RWPE1 (cell line): ENCODE measurements at regions of chr4 and their contacts with region 1.

Region 1: GRCh38 chr4:78171482-78171881 is 114.4 kb downstream of the FRAS1 start:
- DNase-seq: no peak
- H3K27ac ChIP-seq: no peak overlapping the region
- CTCF ChIP-seq: no peak

Region 2: GRCh38 chr4:77921701-77922100 is 249.8 kb before region 1 on chr4:
- CTCF ChIA-PET with region 1: no interaction called
- POLR2A ChIA-PET with region 1: no interaction called
- DNase-seq: peak; percentile 82
- H3K27ac ChIP-seq: no peak overlapping the region
- CTCF ChIP-seq: no peak

Region 3: DNA sequence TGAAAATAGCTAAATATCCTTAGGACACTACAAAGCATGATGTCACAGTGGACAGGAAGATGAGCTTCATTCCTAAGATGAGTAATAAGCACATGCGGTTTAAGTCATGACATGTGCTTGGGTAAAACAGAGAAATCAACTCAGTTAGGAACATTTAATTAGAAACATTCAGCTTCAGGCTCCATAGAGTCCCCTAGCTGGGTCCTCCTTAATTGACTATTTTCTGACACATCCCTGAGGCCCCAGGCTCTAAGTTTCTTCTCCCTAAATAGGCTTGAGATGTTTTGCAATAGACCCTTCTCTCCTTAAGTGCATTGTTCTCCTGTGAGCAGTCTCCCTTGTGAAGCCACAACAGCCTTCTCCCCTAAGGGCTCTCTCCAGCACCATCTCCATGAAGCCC is 309.7 kb after region 1 on chr4:
- CTCF ChIA-PET with region 1: no interaction called
- POLR2A ChIA-PET with region 1: interaction called, 10 read pairs
- DNase-seq: peak; percentile 42
- H3K27ac ChIP-seq: no peak overlapping the region
- CTCF ChIP-seq: no peak